ENCODE measurements at regions of chr6 and their contacts with region 1.

Region 1: GRCh38 chr6:127120787-127121636 is 2.5 kb downstream of the RSPO3 start:
- DNase-seq: peak; percentile 86
- H3K4me3 Mint-ChIP-seq: no peak overlapping the region
- H3K27ac Mint-ChIP-seq: no peak overlapping the region
- H3K4me1 Mint-ChIP-seq: peaks cover 24% of the 10 kb centered on the region
- H3K27me3 Mint-ChIP-seq: peaks cover 57% of the 10 kb centered on the region

Region 2: GRCh38 chr6:126361832-126362412 is 759.1 kb before region 1 on chr6:
- CTCF ChIA-PET with region 1: no interaction called
- POLR2A ChIA-PET with region 1: no interaction called
- intact Hi-C with region 1: loop called (anchors 2 kb)
- DNase-seq: no peak
- H3K4me3 Mint-ChIP-seq: no peak overlapping the region
- H3K27ac Mint-ChIP-seq: no peak overlapping the region
- H3K4me1 Mint-ChIP-seq: no peaks in the 10 kb centered on the region
- H3K27me3 Mint-ChIP-seq: no peaks in the 10 kb centered on the region

Region 3: DNA sequence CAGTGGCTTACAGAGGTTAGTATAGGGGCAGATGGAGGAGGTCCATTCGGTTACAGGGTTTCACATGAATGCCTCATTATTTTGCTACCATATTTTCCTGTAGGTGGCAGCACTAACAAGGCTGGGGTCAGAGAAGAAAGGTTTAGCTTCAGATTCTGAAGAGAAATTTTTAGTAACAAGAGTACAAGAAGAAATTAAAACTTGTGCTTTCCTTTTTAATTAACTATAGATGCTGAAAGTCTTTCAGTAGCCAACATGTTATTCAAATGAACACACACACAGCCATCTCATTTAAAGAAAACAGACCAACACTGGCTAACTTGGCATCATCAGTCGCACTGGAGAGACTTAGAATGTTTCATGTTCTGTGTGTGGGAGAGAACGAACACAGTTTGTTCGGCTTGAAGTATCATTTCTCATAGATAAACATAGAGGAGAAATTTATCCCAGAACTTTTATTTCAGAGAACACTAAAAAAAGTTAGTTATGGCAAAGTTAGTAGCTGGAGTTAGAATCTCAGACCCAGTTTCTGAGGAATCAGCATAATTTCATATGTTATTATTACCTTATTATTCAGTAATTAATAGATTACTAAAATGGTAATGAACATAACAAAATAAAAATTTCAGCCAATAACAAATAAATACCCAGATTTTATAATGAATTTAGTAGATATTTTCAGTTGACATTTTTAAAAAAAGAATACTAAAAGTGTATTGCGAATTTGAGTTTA is 316.5 kb before region 1 on chr6:
- CTCF ChIA-PET with region 1: interaction called, 4 read pairs
- POLR2A ChIA-PET with region 1: no interaction called
- intact Hi-C with region 1: loop called (anchors 1 kb)
- DNase-seq: no peak
- H3K4me3 Mint-ChIP-seq: no peak overlapping the region
- H3K27ac Mint-ChIP-seq: no peak overlapping the region
- H3K4me1 Mint-ChIP-seq: no peaks in the 10 kb centered on the region
- H3K27me3 Mint-ChIP-seq: peaks cover 2% of the 10 kb centered on the region